Motor neuron (in vitro differentiated cells): ENCODE measurements at regions of chr14 and their contacts with region 1.

Region 1: DNA sequence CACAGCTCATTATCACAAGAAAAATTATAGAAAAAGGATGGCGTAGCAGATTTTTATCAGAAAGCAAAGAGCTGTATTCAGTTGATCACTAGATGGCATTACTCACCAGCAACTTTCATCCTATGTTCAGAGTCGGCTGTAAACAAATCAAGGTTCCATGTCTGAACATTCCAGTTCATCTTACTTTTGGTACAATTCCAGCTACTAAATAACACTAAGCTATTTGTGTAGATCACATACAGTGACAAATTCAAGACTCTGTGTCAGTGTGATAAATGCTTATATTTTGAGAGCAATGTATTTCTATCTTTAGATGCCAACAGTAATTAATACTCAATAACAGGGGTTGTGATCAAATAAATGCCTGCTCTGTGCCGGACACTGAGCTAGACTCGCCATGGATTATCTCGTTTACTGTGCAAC is 30.1 kb downstream of the NRDE2 start:
- ATAC-seq: peak in 7 of 8 experiments; percentile 50 to 68 (median 62)
- H3K4me3 ChIP-seq: no peak overlapping the region
- H3K27ac ChIP-seq: no peak overlapping the region
- H3K4me1 ChIP-seq: no peaks in the 10 kb centered on the region

Region 2: DNA sequence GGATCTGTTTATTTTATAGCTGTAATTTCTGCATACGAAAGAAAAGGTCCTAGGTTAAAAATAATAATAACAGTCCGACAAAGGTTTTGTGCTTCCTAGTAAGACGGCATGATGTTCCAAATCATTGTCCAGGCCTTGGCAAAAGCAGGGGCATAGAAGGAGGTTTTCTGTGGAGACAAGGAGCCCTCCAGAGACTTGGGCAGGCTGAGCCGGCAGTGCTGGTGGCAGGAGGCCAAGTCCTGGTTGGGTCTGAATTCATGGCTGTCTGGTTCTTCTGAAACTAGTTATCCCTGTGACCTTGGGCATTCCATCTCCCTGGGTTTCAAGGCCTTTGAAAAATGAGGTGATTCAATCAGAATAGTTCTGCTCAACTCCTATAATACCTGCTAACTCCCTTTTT is 195.9 kb before region 1 on chr14:
- in situ Hi-C with region 1: no loop called
- ATAC-seq: peak in 1 of 8 experiments; percentile 39
- H3K4me3 ChIP-seq: no peak overlapping the region
- H3K27ac ChIP-seq: no peak overlapping the region
- H3K4me1 ChIP-seq: no peaks in the 10 kb centered on the region

Region 3: DNA sequence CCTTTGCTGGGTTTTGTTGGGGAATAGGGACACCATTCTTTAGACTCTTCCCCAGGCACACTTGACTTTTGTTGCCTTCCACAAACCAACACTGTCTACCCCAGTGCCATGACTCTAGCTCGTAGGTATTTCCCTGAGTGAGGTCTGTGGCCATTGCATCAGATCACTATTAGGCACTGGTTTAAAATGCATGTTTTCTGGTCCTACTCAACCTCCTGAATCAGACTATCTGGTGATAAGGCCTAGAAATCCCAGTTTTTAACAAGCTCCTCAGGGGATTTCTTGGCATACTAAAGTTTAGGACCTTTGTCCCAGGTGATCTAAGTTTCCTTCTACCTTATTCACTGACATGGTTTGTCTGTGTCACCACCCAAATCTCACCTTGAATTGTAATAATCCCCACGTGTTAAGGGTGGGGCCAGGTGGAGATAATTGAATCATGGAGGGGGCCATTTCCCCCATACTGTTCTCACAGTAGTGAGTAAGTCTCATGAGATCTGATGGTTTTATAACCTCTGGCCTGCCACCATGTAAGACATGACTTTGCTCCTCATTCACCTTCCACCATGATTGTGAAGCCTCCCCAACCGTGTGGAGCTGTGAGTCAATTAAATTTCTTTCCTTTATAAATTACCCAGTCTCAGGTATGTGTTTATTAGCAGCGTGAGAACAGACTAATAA is 133.1 kb before region 1 on chr14:
- in situ Hi-C with region 1: no loop called
- ATAC-seq: no peak
- H3K4me3 ChIP-seq: no peak overlapping the region
- H3K27ac ChIP-seq: no peak overlapping the region
- H3K4me1 ChIP-seq: no peaks in the 10 kb centered on the region

Region 4: DNA sequence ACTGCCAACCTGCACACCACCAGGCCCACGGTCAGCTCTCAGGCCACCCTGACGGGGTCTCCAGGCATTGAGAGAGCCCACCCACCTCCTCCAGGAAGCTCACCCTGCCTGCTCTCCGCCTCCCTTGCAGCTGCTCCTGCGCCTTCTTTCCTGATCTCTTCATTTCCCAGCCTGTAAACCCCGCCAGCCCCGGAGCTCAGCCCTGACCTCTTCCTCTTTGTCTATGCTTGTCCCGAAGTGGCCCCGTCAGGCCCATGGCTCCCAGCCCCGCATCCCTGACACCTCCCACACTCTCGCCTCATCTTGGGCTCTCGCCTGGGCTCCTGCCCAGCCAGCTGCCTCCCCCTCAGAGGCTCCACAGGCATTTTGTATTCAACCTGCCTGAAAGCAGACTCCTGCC is 234.4 kb after region 1 on chr14:
- in situ Hi-C with region 1: no loop called
- ATAC-seq: no peak
- H3K4me3 ChIP-seq: no peak overlapping the region
- H3K27ac ChIP-seq: no peak overlapping the region
- H3K4me1 ChIP-seq: no peaks in the 10 kb centered on the region

Region 5: DNA sequence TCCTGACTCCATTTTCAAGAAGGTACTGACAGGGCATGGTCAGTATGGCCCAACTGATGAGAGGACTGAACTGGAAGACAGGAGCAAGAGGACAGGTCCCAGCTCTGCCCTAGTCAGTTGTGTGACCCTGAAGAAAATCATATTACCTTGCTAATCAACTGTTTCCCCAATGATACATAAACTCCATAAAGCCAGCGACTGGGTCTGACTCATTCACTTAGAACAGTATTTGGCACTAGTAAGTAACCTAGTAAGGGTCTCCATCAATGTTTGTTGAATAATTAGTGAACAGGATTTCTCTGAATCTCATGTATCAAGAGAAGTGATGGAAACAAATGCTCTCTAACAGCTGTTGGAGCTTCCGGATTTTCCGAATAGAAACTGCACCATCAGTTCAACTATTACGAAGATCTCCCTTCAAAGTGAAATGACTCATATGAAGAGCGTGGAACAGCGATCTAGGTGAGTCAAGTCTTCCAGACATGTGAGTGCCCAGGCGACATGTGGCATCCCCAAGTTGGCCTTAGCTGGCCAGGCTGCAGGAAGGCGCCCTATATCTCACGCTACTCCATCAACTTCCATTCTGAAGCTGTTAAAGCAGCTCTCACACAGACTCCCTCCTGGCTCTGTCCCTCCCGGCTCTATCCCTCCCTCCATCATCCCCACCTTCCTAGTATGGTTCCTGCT is 420.1 kb after region 1 on chr14:
- in situ Hi-C with region 1: loop called in 1 of 9 experiments (anchors 25 kb)
- ATAC-seq: peak in 1 of 8 experiments; percentile 14
- H3K4me3 ChIP-seq: no peak overlapping the region
- H3K27ac ChIP-seq: no peak overlapping the region
- H3K4me1 ChIP-seq: no peaks in the 10 kb centered on the region

Region 6: DNA sequence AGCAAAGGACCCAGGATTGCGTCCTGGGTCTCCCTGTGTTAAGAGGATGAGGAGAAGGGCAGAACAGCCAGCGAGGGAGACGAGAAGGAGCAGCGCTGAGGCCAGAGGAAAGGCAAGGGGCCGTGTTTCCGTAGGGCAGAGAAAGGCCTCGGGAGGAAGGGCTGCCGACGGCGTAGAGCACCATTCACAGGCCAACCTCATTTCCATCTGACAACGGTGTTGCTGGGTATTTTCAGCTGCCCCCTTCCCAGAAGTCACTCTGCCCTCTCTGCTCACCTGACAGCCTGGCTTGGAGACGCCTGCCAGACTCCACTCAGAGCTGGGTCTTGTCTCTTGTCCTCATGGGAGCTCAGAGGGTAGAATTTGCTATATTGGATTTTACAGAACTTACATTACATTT is 891.4 kb after region 1 on chr14:
- in situ Hi-C with region 1: no loop called
- ATAC-seq: no peak
- H3K4me3 ChIP-seq: no peak overlapping the region
- H3K27ac ChIP-seq: no peak overlapping the region
- H3K4me1 ChIP-seq: no peaks in the 10 kb centered on the region